Mammary epithelial cell (primary cell): ENCODE measurements at regions of chr3 and their contacts with region 1.

Region 1: DNA sequence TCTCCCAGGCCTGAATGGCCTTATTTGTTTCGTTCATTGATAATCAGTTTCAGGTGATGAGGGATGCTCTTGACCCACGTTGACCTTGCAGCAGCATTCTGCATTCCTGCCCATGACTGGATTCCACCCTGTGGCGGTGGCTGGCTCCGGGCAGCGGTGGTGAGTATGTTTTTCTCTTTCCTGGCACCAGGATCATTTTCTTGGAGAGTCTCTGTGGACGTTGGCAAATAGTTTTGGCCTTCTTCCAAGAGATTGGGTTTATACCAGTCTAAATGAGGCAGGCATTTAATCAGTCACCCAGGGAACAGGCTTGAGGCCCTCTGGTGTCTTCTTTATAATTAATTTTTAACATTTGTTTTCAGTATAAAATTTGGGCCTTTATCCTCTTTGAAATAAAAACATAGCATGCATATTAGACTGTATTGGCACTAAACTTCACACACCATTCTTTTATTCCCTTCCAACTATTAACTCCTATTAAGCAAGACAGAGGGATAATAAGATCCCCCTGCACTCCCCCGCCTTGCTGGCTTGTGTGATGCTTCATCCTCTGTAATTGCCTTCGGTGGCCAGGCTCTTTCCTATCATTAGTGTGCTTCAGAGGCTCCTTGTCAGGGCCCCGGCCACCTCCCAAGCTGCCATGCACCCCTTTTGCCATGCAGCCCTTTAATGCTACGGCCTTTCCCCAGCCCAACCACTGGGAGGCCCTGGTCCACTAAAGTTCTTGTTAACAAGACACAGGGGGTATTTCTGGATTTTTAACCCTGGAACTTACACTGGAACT is 176.2 kb upstream of the TOPAZ1 start:
- DNase-seq: peak; percentile 83
- H3K4me3 ChIP-seq: no peak overlapping the region
- H3K27ac ChIP-seq: no peak overlapping the region
- H3K4me1 ChIP-seq: peaks cover 41% of the 10 kb centered on the region
- H3K27me3 ChIP-seq: no peaks in the 10 kb centered on the region
- CTCF ChIP-seq: peak in 1 of 2 donors; percentile 27

Region 2: DNA sequence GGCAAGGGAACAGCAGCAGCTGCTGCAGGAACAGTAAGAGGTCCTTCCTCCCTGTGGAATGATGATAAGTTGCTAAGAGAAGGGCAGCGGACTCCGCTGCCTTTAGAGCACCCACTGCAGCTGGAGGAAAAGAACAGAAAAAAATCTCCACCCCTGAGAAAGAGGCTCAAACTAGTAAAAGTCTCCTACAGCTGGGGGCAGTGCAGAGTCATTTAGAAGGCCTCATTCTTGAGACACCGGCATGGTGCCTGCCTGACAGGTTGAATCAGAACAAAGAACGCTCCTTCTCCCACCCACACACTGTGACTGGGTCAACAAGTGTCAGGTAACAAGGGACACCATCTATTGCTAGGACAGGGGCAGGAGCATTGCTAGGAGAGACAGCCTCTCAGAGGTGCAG is 186.3 kb before region 1 on chr3:
- CTCF ChIA-PET with region 1: no interaction called
- dilution Hi-C with region 1: no loop called
- in situ Hi-C with region 1: no loop called
- intact Hi-C with region 1: loop called (anchors 10 kb)
- DNase-seq: peak; percentile 25
- H3K4me3 ChIP-seq: no peak overlapping the region
- H3K27ac ChIP-seq: no peak overlapping the region
- H3K4me1 ChIP-seq: peaks cover 23% of the 10 kb centered on the region
- H3K27me3 ChIP-seq: no peaks in the 10 kb centered on the region
- CTCF ChIP-seq: peak; percentile 22 to 50